Posterior vena cava (tissue), 2 donors: ENCODE measurements at regions of chr2 and their contacts with region 1.

Region 1: DNA sequence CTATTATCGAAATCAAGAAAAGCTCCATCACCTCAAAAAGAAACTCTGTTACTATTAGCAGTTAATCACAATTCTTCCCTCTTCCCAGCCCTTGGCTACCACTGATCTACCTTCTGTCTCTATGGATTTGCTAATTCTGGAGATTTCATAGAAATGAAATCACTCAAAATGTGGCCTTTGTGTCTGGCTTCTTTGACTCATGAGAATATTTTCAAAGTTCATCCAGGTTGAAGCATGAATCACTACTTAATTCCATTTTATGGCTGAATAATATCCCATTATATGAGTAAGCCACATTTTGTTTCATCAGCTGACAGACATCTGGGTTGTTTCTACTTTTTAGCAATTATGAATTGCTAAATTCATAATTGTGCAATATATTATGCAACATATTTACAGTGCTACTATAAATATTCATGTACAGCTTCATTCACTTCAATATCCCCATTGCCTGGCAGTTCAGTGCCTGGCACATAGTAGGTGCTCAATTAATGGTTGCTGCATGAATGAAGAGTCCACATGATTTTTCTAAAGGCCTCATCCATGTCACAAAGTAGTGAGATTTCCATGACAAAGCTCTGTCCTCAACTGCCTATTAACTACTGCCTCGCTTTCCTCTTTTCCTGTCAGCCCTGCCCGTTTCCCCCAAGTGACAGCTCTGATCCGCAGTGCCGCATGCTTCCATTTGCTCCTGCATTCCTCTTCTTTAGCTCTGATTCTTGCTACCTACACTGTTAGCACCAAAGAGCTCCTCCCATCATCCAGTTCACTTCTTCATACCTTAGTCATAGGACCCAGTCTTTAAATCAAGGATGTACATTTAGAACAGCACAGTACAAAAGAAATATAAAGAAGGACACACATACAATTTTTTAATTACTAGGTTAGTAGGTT is 32.8 kb downstream of the CCDC93 start:
- DNase-seq: no peak

Region 2: GRCh38 chr2:117875786-117876185 is 105.2 kb before region 1 on chr2:
- intact Hi-C with region 1: no loop called
- DNase-seq: no peak

Region 3: GRCh38 chr2:117997872-117998454 is 16.9 kb after region 1 on chr2:
- intact Hi-C with region 1: no loop called
- DNase-seq: no peak

Region 4: DNA sequence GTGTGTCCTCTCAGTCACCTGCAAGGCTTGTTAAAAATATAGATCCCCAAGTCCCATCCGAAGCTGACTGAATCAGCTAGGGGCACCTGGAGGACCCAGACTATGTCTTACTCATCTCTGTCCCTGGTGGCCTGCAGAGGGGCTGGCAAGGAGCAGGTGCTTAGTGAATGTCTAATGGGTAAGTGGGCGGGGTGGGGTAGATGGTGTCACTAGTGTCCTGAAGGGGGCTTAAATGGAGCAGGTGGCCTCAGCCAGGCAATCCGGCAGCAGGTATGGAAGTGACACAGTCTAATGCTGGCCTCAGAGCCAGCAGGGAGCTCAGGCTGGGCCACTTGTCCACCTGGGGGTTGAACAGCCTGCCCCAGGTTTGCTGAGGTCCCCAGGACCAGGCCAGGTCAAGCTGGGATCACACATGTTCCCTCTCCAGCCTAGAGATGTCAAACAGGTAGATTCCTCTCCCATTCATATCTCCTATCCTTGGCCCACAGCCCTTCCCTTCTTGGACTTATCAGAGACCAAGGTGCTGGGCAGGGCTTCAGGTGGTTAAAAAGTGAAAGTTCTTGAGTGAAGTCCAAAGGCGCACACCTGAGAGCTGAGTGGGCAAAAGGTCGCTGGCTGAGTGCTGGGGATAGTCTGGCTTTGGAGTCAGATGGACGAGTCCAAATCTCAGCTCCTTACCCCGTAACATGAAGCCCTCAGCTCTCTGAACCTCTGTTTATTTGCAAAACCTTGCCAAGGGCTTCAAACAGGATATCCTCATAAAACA is 1244.3 kb after region 1 on chr2:
- intact Hi-C with region 1: loop called in 1 of 2 experiments (anchors 5 kb)
- DNase-seq: no peak